ENCODE measurements at regions of chr2 and their contacts with region 1.

Region 1: GRCh38 chr2:204325468-204325867 is 219.8 kb upstream of the PARD3B start:
- DNase-seq: peak in 3 of 4 donors; percentile 40 to 87 (median 82)
- ATAC-seq: peak; percentile 95
- H3K4me3 ChIP-seq: no peak overlapping the region
- H3K27ac ChIP-seq: no peak overlapping the region
- H3K4me1 ChIP-seq: no peaks in the 10 kb centered on the region
- H3K27me3 ChIP-seq: no peaks in the 10 kb centered on the region
- CTCF ChIP-seq: peak; percentile 74 to 83

Region 2: DNA sequence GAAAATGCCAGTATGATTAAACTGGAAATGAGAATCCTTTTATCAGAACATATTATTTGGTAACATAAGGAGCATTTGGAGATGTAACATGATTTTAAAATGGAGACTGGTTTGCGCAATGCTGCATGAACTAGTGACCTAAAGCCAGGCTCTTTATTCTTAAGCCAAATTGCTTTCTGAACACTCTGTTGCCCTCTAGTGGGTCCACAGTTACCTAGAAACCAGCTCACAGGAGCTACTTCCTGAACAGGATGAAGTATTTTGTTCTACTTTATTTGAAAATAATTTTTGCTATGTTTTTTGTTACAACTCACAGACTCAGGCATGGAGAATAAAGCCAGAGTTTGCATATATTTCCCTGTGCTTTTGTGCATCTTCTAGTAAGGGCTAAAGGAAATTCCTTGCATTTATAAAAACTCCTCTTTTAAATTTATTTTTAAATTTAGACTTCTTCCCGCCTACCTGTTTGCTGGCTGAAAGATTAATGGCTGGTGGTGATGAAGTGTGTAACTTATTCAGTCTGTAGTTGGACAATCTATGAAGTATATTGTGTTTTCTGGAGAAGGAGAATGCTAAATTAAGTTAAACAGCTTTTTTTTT is 366.5 kb after region 1 on chr2:
- intact Hi-C with region 1: loop called in 1 of 2 experiments (anchors 5 kb)
- DNase-seq: peak in 2 of 4 donors; percentile 88 to 92
- ATAC-seq: peak; percentile 97
- H3K4me3 ChIP-seq: no peak overlapping the region
- H3K27ac ChIP-seq: no peak overlapping the region
- H3K4me1 ChIP-seq: peaks cover 0 to 8% of the 10 kb centered on the region in 2 donors
- H3K27me3 ChIP-seq: no peaks in the 10 kb centered on the region
- CTCF ChIP-seq: peak; percentile 54 to 61

Region 3: GRCh38 chr2:205680067-205680466 is 1354.6 kb after region 1 on chr2:
- intact Hi-C with region 1: loop called in 1 of 2 experiments (anchors 10 kb)
- DNase-seq: peak in 2 of 4 donors; percentile 57 to 82
- ATAC-seq: peak; percentile 36
- H3K4me3 ChIP-seq: no peak overlapping the region
- H3K27ac ChIP-seq: no peak overlapping the region
- H3K4me1 ChIP-seq: peaks cover 6 to 32% of the 10 kb centered on the region in 2 donors
- H3K27me3 ChIP-seq: peaks cover 0 to 50% of the 10 kb centered on the region in 2 donors
- CTCF ChIP-seq: peak; percentile 55 to 68

Measured in left lung (tissue), 14 donors.